Calu3 (cell line): ENCODE measurements at regions of chr10 and their contacts with region 1.

Region 1: DNA sequence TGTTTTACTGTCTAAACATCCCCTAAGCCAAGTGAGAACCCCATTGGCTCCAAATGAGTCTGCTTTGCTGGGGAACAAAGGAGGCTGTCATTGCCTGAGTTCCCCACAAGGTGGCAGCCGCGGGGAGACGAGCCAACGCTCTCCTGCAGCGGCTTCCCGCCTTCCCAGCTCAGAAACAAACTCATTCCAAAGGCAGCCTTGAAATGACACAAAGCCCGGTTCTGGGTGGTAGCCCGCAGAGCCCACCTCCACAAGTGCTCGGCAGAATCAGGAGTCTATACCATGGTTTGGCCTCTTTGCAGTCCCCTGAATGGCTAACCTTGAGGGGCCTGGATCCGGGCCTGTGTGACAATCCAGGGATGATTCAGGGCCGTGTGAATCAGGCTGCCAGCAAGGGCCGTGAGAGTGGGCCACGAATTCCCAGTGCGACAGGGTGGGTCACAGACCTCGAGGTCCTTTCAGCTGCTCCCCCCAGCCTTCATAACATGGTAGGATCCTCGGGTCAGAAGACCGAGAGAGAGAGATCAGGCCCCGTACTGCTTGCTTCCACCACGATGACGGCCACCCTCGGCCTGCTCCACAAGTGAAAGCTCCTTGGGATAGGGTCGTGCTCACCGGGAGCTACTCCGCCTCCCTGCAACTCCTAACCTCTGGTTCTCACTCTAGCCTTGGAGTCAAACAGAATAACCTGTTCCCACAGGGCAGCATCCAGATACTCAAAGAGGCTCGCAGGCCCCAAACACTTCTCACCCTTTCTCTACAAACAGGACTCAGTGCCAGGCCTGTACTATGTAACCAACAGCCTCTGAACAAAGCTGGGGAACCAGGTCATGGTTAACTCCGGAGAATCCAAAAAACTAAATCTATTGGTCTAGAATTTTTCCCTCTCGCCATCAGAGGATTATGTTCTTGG is 79.6 kb downstream of the DLG5 start:
- DNase-seq: peak; percentile 91
- H3K4me3 Mint-ChIP-seq: no peak overlapping the region
- H3K27ac Mint-ChIP-seq: peak overlapping the region; percentile 21
- H3K4me1 Mint-ChIP-seq: peaks cover 66% of the 10 kb centered on the region
- H3K27me3 Mint-ChIP-seq: no peaks in the 10 kb centered on the region
- CTCF ChIP-seq: peak; percentile 97

Region 2: DNA sequence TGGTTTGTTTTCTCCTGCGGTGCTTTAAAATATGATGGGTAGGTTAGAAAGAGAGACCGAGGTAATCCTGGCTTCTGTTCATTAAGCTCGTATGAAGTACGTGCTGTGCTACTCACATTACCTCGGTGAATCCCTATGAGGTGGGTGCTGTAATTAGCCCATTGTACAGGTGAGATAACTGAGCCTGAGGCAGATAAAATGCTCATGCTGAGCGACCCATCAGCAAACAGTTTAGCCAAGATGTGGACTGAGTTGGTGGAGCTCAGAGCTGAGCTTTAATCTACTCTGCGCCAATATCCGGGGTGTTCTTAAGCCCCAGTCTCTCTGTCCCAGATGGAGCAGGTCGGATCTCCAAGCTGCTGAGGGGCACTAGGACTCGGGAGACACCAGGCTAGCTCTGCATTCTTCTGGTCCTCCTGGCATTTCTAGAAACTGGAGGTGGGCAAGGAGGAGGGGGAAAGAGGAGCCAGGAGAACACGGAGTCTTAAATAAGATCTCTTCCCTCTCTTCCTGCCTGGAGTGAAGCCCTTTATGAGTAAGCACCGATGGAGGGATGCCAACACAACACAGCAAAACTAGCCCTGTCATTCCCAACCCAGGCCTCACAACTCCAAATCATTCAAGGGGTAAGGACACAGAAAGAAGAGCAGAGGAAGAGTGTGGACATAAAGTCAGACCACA is 667.8 kb before region 1 on chr10:
- CTCF ChIA-PET with region 1: no interaction called
- intact Hi-C with region 1: no loop called
- DNase-seq: no peak
- H3K4me3 Mint-ChIP-seq: no peak overlapping the region
- H3K27ac Mint-ChIP-seq: no peak overlapping the region
- H3K4me1 Mint-ChIP-seq: no peaks in the 10 kb centered on the region
- H3K27me3 Mint-ChIP-seq: no peaks in the 10 kb centered on the region
- CTCF ChIP-seq: no peak

Region 3: GRCh38 chr10:77801474-77802161 is 45.4 kb before region 1 on chr10:
- CTCF ChIA-PET with region 1: no interaction called
- intact Hi-C with region 1: no loop called
- DNase-seq: no peak
- H3K4me3 Mint-ChIP-seq: no peak overlapping the region
- H3K27ac Mint-ChIP-seq: no peak overlapping the region
- H3K4me1 Mint-ChIP-seq: no peaks in the 10 kb centered on the region
- H3K27me3 Mint-ChIP-seq: no peaks in the 10 kb centered on the region
- CTCF ChIP-seq: no peak

Region 4: GRCh38 chr10:77907900-77908717 is 61.1 kb after region 1 on chr10:
- CTCF ChIA-PET with region 1: interaction called, 5 read pairs
- intact Hi-C with region 1: loop called (anchors 5 kb)
- DNase-seq: peak; percentile 36
- H3K4me3 Mint-ChIP-seq: no peak overlapping the region
- H3K27ac Mint-ChIP-seq: no peak overlapping the region
- H3K4me1 Mint-ChIP-seq: peaks cover 73% of the 10 kb centered on the region
- H3K27me3 Mint-ChIP-seq: no peaks in the 10 kb centered on the region
- CTCF ChIP-seq: peak; percentile 30

Region 5: DNA sequence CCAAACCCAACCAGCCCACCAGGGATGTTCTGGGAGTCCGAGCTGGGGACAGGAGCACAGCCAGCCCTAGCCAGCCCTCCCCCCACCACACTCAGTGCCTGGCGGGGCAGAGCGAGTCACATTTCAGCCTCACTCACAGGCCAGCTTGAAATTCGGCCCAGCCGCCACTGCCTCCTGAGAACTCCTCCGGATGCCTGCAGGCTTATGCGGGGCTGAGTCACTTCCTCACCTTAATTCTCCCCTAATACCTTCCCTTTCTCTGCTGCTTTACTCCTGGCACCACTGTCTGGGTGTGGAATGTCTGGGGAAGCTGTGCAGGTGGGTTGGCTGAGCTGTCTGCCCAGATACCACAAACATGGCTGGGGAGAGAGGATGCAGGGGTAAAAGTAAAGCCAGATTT is 102.2 kb after region 1 on chr10:
- CTCF ChIA-PET with region 1: interaction called, 7 read pairs
- intact Hi-C with region 1: loop called (anchors 5 kb)
- DNase-seq: peak; percentile 87
- H3K4me3 Mint-ChIP-seq: no peak overlapping the region
- H3K27ac Mint-ChIP-seq: peak overlapping the region; percentile 51
- H3K4me1 Mint-ChIP-seq: peaks cover 34% of the 10 kb centered on the region
- H3K27me3 Mint-ChIP-seq: no peaks in the 10 kb centered on the region
- CTCF ChIP-seq: no peak

Region 6: DNA sequence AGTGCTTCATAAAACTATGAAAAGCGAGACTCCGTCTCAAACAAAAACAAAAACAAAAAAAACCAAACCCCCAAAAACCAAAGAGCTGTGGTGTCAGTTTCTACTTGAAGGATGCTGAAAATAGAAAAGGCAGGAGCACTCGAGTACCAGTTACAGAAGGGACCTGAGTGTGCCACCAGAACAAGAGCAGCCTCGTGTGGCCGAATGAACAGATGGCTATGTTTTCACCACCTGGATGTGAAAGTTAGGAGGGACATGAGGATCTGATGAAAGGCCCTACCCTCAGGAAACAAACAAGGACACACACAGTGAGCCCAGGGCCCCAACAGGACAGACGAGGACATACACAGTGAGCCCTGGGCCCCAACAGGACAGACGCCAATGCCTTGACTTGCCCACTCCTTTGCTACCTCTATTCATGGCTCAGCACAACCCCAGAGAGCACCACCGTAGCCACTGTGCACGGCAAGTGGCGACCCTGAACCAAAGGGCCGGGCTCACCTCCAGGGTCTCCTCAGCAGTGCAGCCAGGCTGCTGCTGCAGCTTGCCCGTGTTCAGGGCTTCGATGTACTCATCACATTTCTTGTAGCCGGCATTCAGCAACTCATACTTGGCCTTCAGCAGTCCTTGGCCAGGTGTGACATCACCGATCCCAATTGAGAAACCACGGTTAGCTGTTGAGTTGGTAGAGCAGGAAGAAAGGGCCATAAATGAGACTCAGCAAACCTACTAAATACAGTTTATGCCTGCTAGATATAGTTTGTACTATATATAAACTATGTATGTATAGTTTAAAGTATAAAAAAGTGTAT is 157.4 kb after region 1 on chr10:
- CTCF ChIA-PET with region 1: no interaction called
- intact Hi-C with region 1: loop called (anchors 10 kb)
- DNase-seq: no peak
- H3K4me3 Mint-ChIP-seq: no peak overlapping the region
- H3K27ac Mint-ChIP-seq: no peak overlapping the region
- H3K4me1 Mint-ChIP-seq: no peaks in the 10 kb centered on the region
- H3K27me3 Mint-ChIP-seq: no peaks in the 10 kb centered on the region
- CTCF ChIP-seq: no peak

Region 7: GRCh38 chr10:78081292-78081691 is 234.3 kb after region 1 on chr10:
- CTCF ChIA-PET with region 1: no interaction called
- intact Hi-C with region 1: no loop called
- DNase-seq: no peak
- H3K4me3 Mint-ChIP-seq: no peak overlapping the region
- H3K27ac Mint-ChIP-seq: no peak overlapping the region
- H3K4me1 Mint-ChIP-seq: no peaks in the 10 kb centered on the region
- H3K27me3 Mint-ChIP-seq: peaks cover 91% of the 10 kb centered on the region
- CTCF ChIP-seq: no peak